Sciatic nerve (tissue), 2 donors: ENCODE measurements at regions of chr7 and their contacts with region 1.

Region 1: DNA sequence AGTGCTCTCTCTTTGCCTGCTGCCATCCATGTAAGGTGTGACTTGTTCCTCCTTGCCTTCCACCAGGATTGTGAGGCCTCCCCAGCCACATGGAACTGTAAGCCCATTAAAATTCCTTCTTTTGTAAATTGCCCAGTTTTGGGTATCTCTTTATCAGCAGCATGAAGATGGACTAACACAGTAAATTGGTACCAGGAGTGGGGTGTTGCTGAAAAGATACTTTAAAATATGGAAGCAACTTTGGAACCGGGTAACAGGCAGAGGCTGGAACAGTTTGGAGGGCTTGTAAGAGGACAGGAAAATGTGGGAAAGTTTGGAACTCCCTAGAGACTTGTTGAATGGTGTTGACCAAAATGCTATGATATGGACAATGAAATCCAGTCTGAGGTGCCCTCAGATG is 63.8 kb upstream of the PPP1R9A start:
- DNase-seq: no peak
- ATAC-seq: no peak

Region 2: DNA sequence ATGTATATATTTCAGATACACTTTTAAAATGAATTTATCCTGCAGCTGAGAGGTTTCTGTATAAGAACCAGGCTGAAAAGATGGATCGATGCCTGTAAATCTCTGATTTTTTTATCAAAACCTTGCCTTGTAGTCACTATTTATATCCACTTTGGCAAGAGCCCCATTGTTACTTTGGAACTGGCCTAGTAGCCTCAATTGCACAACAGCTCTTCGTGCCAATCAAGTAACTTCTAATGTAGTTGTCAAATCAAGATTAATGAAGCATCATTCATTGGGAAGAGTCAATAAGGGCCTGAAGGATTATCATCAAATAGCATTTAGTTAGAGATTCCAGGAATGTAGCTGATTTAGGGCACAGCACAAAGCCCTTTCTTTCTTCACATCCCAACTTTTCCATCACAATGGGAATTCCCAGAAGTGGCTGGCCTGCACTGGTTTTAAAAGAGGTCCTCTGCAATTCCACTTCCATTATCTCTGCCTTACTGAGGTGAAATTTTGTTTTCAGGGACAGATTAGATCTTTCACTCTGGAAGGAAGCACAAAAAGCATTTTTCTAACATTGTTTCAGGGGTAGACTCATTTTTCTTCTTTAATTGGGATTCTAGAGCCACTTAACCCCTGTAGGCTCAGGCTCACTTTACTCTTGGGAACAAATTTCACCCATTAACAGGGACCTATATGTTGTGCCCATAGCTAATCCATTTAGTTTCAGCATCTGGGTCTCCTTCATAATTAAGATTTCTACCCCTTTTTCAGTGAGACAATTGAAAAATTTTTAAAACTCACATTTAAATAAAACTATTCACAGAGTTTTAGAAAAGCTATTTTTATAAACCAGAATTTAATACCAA is 1366.8 kb before region 1 on chr7:
- intact Hi-C with region 1: loop called (anchors 5 kb)
- DNase-seq: no peak
- ATAC-seq: no peak